Activated CD4-positive, alpha-beta memory T cell treated with anti-CD3 and anti-CD28 coated beads, Interleukin-2, amount 10 ng/mL, durations not matched to agents 7 days and 5 days (primary cell): ENCODE measurements at regions of chr16 and their contacts with region 1.

Region 1: DNA sequence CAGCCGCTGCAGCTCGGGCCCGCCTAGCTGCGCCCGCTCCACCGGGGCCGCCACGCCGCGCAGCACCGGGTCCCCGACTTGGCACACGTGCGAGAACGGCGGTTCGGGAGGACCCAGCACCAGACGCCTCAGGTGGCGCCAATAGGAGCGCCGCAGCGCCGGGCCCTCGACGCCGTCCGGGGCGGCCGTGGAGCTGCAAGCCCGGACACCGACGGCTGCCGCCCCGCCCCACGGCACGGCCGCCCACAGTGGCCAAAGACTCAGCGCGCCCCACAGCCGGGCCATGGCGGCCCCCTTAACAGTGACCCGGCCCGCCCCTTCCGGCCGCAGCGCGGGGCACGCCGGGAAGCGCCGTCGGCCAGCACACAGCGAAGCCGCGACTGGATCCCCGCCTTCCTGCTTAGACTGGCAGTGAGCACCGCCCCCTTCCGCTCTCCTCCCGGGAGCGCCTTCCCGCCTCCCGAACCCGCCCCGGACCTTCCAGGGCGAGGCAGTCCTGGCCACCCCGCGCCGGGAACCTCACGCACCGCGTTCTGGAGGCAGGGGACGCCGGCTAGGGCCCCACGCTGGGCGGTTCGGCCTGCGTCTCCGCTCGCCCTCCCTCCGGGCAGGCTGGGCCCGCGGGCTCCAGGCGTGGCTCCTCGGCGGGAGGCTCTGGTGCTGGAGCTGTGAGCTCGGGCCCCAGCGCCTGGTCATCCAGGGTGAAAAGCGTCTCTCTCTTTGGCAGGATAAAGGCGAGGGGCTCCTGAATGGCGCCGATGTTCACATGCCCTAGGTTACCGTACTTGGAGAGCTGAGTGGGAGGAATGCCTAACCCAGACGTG is at the start of gene PDF:
- DNase-seq: peak; percentile 87
- H3K4me3 Mint-ChIP-seq: peak within 1 kb of the TSS; percentile 80
- H3K27ac Mint-ChIP-seq: peak within 1 kb of the TSS; percentile 78
- H3K4me1 Mint-ChIP-seq: peaks cover 48% of the 10 kb centered on the region
- H3K27me3 Mint-ChIP-seq: no peaks in the 10 kb centered on the region
- total RNA-seq, gene PDF: 8.8 to 9.7 TPM

Region 2: DNA sequence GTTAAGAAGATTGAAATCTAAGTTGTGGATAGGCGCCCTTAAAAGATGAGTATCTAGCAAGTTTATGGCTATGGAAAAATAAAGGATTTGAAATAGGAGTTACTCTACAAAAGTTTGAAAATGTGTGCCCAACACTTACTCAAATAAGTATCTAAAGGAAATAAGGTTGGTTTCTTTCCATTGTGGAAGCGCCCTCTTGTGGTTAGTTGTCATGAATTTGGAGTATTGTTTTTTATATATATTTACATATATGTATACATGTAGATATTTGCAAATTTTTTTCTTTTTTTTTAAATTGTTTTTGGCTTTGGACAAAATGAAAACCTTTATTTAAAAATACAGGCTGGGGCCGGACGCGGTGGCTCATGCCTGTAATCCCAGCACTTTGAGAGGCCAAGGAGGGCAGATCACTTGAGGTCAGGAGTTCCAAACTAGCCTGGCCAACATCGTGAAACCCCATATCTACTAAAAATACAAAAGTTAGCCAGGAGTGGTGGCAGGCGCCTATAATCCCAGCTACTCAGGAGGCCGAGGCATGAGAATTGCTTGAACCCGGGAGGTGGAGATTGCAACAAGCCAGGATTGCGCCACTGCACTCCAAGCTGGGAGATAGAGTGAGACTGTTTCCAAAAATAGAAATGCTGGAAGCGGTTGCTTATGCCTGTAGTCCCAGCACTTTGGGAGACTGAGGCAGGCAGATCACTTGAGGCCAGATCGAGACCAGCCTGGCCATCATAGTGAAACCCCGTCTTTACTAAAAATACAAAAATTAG is 43.4 kb before region 1 on chr16:
- CTCF ChIA-PET with region 1: no interaction called
- POLR2A ChIA-PET with region 1: no interaction called
- DNase-seq: no peak
- H3K4me3 Mint-ChIP-seq: no peak overlapping the region
- H3K27ac Mint-ChIP-seq: no peak overlapping the region
- H3K4me1 Mint-ChIP-seq: peaks cover 2% of the 10 kb centered on the region
- H3K27me3 Mint-ChIP-seq: no peaks in the 10 kb centered on the region

Region 3: DNA sequence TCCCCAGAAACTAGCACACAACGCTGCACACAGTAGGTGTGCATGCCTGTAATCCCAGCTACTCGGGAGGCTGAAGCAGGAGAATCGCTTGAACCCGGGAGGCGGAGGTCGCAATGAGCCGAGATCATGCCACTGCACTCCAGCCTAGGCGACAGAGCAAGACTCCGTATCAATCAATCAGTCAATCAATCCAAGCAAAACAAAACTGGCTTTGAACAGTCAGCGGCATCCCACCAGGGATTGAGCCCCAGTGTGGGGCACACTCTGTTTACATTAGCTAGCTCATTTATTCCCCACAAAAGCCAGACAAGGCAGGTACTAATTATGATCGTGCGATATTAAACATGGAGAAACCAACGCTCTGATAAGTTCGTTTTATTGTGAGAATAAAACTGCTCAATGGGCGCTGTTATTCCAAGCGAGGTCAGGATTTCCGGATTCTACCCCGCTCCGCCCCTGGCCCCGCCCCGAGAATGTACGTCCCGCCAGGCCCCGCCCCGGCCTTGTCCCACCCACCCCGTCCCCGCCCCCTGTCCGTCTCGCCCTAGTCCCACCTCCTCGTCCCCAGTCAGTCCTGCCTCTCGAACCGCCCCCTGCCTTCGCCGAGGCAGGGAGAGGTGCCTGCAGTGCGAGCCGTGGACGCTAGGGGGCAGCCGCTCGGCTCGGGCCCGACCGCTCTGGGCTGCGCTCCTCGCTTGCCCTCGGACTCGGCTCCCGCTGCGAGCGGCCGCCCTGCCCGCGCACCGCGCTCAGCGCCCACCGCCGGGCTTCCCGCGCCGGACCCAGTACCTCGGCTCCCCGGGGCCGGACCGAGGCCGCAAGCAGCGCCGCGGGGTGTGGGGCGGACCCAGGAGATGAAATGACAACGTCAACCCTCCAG is 19.6 kb before region 1 on chr16 and contains the start of gene VPS4A:
- CTCF ChIA-PET with region 1: interaction called, 9 read pairs
- POLR2A ChIA-PET with region 1: interaction called, 49 read pairs
- DNase-seq: peak; percentile 97
- H3K4me3 Mint-ChIP-seq: peak within 1 kb of the TSS; percentile 94
- H3K27ac Mint-ChIP-seq: peak within 1 kb of the TSS; percentile 90
- H3K4me1 Mint-ChIP-seq: peaks cover 24% of the 10 kb centered on the region
- H3K27me3 Mint-ChIP-seq: no peaks in the 10 kb centered on the region
- total RNA-seq, gene VPS4A: 32.3 to 34.9 TPM

Region 4: DNA sequence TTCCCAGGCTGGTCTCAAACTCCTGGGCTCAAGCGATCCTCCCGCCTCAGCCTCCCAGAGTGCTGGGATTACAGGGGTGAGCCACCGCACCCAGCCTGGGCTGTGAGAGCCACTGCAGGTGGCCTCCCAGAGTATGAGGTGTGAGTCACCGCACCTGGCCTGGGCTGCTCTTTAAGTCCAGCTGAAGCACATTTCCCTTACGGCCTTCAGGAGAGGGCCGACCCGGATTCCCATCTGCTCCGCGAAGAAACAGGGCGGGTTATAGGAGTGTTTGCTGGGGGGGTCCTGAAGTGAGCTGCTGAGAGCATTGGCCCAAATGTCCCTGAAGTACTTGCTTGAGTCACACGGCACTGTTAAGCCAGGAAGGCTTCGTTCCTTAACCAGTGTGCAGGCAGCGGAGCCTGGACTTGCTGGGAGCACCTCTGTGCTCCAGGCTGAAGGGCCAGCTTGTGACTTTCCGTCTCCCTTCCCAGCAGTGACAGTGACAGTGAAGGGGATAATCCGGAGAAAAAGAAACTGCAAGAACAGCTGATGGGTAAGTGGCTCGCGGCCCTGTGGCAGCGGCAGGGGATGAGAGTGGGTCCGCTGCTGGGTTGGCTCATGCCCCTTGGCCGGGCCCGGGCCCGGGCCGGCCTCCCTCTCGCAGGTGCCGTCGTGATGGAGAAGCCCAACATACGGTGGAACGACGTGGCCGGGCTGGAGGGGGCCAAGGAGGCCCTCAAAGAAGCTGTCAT is 12.2 kb before region 1 on chr16:
- CTCF ChIA-PET with region 1: interaction called, 6 read pairs
- POLR2A ChIA-PET with region 1: interaction called, 49 read pairs
- DNase-seq: no peak
- H3K4me3 Mint-ChIP-seq: no peak overlapping the region
- H3K27ac Mint-ChIP-seq: no peak overlapping the region
- H3K4me1 Mint-ChIP-seq: peaks cover 6% of the 10 kb centered on the region
- H3K27me3 Mint-ChIP-seq: no peaks in the 10 kb centered on the region